Activated CD8-positive, alpha-beta T cell treated with anti-CD3 and anti-CD28 coated beads, Interleukin-2, amount 10 ng/mL, durations not matched to agents 7 days and 5 days (primary cell): ENCODE measurements at regions of chr19 and their contacts with region 1.

Region 1: GRCh38 chr19:36128392-36128736 is 11.5 kb upstream of the CAPNS1 start:
- DNase-seq: no peak
- ATAC-seq: peak; percentile 1
- H3K4me3 Mint-ChIP-seq: peak overlapping the region; percentile 87
- H3K27ac Mint-ChIP-seq: peak overlapping the region; percentile 94
- H3K4me1 Mint-ChIP-seq: peaks cover 37% of the 10 kb centered on the region
- H3K27me3 Mint-ChIP-seq: no peaks in the 10 kb centered on the region

Region 2: DNA sequence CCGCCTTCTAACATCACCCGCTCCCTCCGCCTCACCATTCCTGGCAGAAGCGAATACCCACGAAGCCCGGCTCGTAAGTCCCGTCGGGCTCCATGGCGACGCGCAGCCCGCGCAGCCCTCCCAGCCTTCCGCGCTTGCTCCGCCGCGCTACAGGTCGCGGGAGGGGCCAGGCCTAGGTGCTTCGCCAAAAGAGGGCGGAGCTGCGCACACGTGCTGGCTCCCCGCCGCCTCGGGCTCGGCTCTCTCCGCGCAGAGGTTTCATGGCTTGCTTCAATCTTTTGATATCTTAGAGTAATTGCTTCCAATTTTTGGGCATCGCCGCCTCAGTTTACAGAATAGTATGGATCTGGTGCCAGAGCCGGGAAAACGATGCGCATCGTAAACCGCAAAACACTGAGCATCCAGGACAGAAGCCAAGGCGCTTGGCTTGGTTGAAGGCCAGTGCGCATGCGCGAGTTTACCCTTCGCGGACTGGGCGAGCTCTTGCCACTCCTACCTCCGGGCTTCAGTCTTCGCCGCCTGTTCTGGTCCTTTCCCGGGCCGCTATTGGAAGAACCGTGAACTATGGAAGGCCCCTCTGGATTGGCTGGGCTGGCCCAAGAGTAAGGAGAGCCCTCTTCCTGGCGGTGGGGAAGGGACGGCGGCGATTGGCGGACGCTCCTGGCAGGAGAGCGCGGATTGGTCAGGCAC is 13.5 kb before region 1 on chr19 and contains the start of gene POLR2I:
- CTCF ChIA-PET with region 1: interaction called, 28 read pairs
- POLR2A ChIA-PET with region 1: interaction called, 7 read pairs
- DNase-seq: peak; percentile 99
- ATAC-seq: peak; percentile 94
- H3K4me3 Mint-ChIP-seq: peak within 1 kb of the TSS; percentile 90
- H3K27ac Mint-ChIP-seq: peak within 1 kb of the TSS; percentile 98
- H3K4me1 Mint-ChIP-seq: peaks cover 37% of the 10 kb centered on the region
- H3K27me3 Mint-ChIP-seq: no peaks in the 10 kb centered on the region
- total RNA-seq, gene POLR2I: 50.5 to 57.3 TPM

Region 3: GRCh38 chr19:36163813-36164212 is 35.4 kb after region 1 on chr19:
- CTCF ChIA-PET with region 1: interaction called, 77 read pairs
- POLR2A ChIA-PET with region 1: no interaction called
- DNase-seq: no peak
- ATAC-seq: no peak
- H3K4me3 Mint-ChIP-seq: no peak overlapping the region
- H3K27ac Mint-ChIP-seq: no peak overlapping the region
- H3K4me1 Mint-ChIP-seq: no peaks in the 10 kb centered on the region
- H3K27me3 Mint-ChIP-seq: no peaks in the 10 kb centered on the region

Region 4: DNA sequence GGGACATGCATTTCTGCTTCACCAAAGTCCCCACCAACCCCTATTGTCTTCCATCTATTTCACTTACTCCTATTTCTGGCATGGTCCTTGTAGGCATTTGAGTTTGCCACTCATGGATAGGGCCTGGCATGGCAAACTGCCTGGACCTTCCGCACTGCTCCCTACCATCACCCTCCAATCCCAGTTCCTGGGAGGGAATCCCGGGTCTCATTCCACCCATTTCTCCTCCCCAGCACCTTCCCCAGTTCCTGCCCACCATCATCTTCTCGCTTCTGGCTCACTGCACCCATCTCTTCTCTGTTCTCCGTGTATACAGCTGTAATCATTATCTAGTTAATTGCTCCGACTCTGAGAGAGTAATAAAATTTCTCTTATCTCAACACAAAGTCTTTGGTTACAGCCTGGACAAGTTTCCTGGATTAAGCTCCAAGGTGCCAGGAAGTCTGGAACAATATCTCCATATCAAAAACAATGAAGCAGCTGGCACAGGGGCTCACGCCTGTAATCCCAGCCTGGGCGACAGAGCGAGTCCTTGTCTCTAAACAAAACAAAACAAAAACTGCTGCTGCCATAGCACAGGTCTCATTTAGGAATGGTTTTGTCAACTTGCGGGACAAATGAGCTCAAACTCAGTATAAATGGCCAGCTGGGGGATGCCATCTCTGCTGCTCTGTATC is 40.9 kb after region 1 on chr19:
- CTCF ChIA-PET with region 1: interaction called, 77 read pairs
- POLR2A ChIA-PET with region 1: interaction called, 4 read pairs
- DNase-seq: no peak
- ATAC-seq: no peak
- H3K4me3 Mint-ChIP-seq: no peak overlapping the region
- H3K27ac Mint-ChIP-seq: no peak overlapping the region
- H3K4me1 Mint-ChIP-seq: peaks cover 6% of the 10 kb centered on the region
- H3K27me3 Mint-ChIP-seq: no peaks in the 10 kb centered on the region

Region 5: GRCh38 chr19:36214386-36215275 is 86.3 kb after region 1 on chr19 and contains the starts of genes ZNF146 and ZNF565:
- CTCF ChIA-PET with region 1: interaction called, 13 read pairs
- POLR2A ChIA-PET with region 1: interaction called, 10 read pairs
- DNase-seq: peak; percentile 99
- ATAC-seq: peak; percentile 94
- H3K4me3 Mint-ChIP-seq: no peak within 1 kb of the TSS
- H3K27ac Mint-ChIP-seq: no peak within 1 kb of the TSS
- H3K4me1 Mint-ChIP-seq: peaks cover 19% of the 10 kb centered on the region
- H3K27me3 Mint-ChIP-seq: no peaks in the 10 kb centered on the region
- total RNA-seq, gene ZNF146: 61.7 to 63.8 TPM
- total RNA-seq, gene ZNF565: 2.2 to 2.7 TPM